OCI-LY7 (cell line): ENCODE measurements at regions of chr1 and their contacts with region 1.

Region 1: GRCh38 chr1:198275597-198275996 is 118.8 kb downstream of the NEK7 start:
- DNase-seq: no peak
- H3K4me3 ChIP-seq: no peak overlapping the region
- H3K27ac ChIP-seq: no peak overlapping the region
- H3K4me1 ChIP-seq: no peaks in the 10 kb centered on the region
- CTCF ChIP-seq: peak; percentile 51

Region 2: DNA sequence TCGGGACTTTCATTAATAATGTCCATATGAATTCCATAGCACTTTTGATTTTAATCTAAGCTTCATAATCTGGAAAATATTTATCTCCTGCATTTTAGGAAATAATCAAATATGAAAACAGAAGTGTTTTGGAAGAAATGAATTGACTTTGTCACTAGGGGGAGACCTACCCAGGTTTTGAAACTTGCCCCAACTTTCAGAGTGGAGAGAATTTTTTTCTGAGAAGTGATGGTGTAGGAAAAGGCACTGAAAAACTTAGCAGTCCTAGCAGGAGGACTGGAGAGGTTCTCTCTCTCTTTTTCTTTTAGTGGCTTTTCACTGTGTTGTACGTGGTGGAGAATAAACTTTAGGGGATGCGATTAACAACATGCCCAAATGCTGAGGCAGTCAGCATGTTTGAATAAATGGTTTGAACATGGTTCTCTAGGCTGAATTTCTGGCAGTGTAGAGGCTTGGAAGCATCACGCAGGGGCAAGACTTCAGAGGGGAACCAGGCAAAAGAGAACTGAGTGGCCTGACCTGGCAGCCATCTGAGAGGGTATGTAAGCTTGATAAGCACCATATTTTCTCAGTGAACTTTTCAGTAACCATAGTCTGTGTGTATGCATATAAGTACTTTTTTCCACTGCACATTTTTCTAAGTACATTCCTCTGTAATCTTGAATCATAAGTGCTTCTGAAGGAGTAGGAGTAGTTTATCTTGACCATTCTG is 187.1 kb before region 1 on chr1:
- CTCF ChIA-PET with region 1: no interaction called
- POLR2A ChIA-PET with region 1: no interaction called
- intact Hi-C with region 1: loop called (anchors 5 kb)
- DNase-seq: peak; percentile 47
- H3K4me3 ChIP-seq: no peak overlapping the region
- H3K27ac ChIP-seq: no peak overlapping the region
- H3K4me1 ChIP-seq: no peaks in the 10 kb centered on the region
- CTCF ChIP-seq: peak; percentile 89

Region 3: DNA sequence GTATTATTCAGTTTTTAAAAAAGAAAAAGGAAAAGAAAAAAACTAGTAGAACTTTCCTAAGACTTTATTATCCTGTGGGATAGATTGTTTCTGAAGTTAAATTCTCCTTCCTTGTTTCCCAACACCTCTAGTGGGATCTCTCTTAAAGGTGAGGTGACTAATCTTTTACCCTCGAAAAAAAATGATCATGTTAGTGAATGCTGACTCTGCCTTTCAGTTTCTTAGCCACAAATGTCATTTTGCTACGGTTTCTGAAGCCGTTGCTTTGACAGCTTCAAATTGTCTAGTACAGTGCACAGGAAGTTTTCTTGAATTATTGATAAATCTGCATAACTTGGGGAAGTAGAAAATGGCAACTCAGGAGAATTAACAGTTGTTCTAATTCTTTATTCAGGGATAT is 131.8 kb before region 1 on chr1:
- CTCF ChIA-PET with region 1: no interaction called
- POLR2A ChIA-PET with region 1: no interaction called
- intact Hi-C with region 1: loop called (anchors 10 kb)
- DNase-seq: no peak
- H3K4me3 ChIP-seq: no peak overlapping the region
- H3K27ac ChIP-seq: no peak overlapping the region
- H3K4me1 ChIP-seq: no peaks in the 10 kb centered on the region
- CTCF ChIP-seq: no peak